Posterior cingulate gyrus (tissue), 11 donors: ENCODE measurements at regions of chr15 and their contacts with region 1.

Region 1: GRCh38 chr15:51888593-51889195 is 59.2 kb downstream of the TMOD3 start:
- DNase-seq: no peak

Region 2: GRCh38 chr15:52068004-52068615 is 179.4 kb after region 1 on chr15:
- intact Hi-C with region 1: no loop called
- DNase-seq: no peak

Region 3: DNA sequence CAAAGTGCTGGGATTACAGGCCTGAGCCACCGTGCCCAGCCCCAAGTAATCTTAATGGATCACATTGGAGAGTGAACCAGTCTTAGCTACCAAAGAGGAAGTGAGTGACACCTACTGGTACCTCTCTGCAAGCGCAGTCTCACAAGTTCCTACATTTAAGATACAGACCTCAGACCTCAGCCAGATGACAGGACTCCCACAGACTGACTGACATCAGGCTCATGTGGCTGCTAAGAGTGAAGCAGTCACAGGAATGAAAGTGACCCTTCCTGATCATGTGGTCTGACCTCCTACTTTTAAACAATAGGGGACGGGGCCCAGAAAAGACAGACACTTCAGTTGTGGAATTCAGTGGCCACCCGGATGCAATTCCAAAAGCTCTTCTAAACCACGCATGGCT is 338.8 kb after region 1 on chr15:
- intact Hi-C with region 1: loop called (anchors 5 kb)
- DNase-seq: peak in 5 of 10 donors; percentile 35 to 67 (median 52)